B cell (primary cell): ENCODE measurements at regions of chr2 and their contacts with region 1.

Region 1: GRCh38 chr2:224025874-224026273 is 13.2 kb downstream of the SERPINE2 start:
- DNase-seq: peak; percentile 90
- ATAC-seq: peak; percentile 97
- H3K4me3 ChIP-seq: peak overlapping the region in 2 of 5 experiments; percentile 2 to 40
- H3K4me3 Mint-ChIP-seq: peak overlapping the region; percentile 57
- H3K27ac ChIP-seq: peak overlapping the region; percentile 43 to 44
- H3K27ac Mint-ChIP-seq: peak overlapping the region; percentile 74
- H3K4me1 ChIP-seq: peaks cover 36% of the 10 kb centered on the region in 2 donors
- H3K4me1 Mint-ChIP-seq: peaks cover 40% of the 10 kb centered on the region
- H3K27me3 ChIP-seq: no peaks in the 10 kb centered on the region
- H3K27me3 Mint-ChIP-seq: no peaks in the 10 kb centered on the region
- CTCF ChIP-seq: no peak

Region 2: GRCh38 chr2:224009605-224010315 is 16.1 kb before region 1 on chr2:
- CTCF ChIA-PET with region 1: no interaction called
- POLR2A ChIA-PET with region 1: no interaction called
- intact Hi-C with region 1: no loop called
- DNase-seq: no peak
- ATAC-seq: no peak
- H3K4me3 ChIP-seq: no peak overlapping the region
- H3K4me3 Mint-ChIP-seq: no peak overlapping the region
- H3K27ac ChIP-seq: no peak overlapping the region
- H3K27ac Mint-ChIP-seq: no peak overlapping the region
- H3K4me1 ChIP-seq: no peaks in the 10 kb centered on the region
- H3K4me1 Mint-ChIP-seq: no peaks in the 10 kb centered on the region
- H3K27me3 ChIP-seq: no peaks in the 10 kb centered on the region
- H3K27me3 Mint-ChIP-seq: no peaks in the 10 kb centered on the region
- CTCF ChIP-seq: no peak

Region 3: DNA sequence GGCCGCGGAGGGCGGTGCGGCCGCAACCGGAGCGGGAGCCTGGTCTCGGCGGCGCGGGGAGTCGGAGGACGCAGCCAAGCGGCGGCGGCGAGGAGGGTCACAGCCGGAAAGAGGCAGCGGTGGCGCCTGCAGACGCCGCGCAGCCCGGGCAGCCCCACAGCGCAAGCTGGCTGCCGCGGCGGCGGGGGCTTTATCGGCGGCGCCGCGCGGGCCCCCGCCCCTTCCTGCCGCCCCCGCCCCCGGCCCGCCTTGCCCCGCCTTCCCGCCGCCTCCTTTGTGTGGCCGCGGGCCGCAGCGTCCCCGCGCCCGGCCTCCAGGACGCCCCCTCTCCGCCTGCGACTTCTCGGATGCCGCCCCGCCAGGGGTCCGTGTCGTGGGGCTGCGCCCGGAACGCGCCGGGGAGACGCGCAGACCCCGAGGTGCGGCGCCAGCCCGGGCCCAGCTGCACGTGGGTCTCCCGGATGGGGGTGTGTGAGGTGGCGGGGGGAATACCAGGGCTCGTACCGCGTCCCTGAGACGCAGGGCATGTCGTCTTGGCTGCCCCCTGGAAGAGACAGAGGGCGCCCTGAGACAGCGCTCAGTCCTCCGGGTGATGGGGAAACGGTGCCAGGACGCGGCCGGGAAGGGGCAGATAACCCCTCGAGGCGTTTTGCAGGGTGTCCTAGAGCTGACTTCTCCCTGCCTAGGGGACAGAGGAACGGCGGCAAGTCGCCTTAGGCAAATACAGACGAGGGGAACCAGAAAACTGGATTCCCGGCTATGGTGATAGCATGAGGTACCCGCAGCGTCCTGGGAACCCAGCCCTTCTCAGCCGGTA is 13.5 kb after region 1 on chr2 and contains the start of gene SERPINE2:
- CTCF ChIA-PET with region 1: no interaction called
- POLR2A ChIA-PET with region 1: no interaction called
- intact Hi-C with region 1: loop called (anchors 2 kb)
- DNase-seq: peak; percentile 65
- ATAC-seq: peak; percentile 55
- H3K4me3 ChIP-seq: peak within 1 kb of the TSS; percentile 36 to 72 (median 56)
- H3K4me3 Mint-ChIP-seq: peak within 1 kb of the TSS; percentile 94
- H3K27ac ChIP-seq: no peak within 1 kb of the TSS
- H3K27ac Mint-ChIP-seq: no peak within 1 kb of the TSS
- H3K4me1 ChIP-seq: peaks cover 13 to 18% of the 10 kb centered on the region in 2 donors
- H3K4me1 Mint-ChIP-seq: peaks cover 19% of the 10 kb centered on the region
- H3K27me3 ChIP-seq: peaks cover 0 to 55% (median 20%) of the 10 kb centered on the region in 4 experiments
- H3K27me3 Mint-ChIP-seq: peaks cover 64% of the 10 kb centered on the region
- CTCF ChIP-seq: no peak
- total RNA-seq, gene SERPINE2: 1.2 and 1.8 TPM in 2 replicates

Region 4: DNA sequence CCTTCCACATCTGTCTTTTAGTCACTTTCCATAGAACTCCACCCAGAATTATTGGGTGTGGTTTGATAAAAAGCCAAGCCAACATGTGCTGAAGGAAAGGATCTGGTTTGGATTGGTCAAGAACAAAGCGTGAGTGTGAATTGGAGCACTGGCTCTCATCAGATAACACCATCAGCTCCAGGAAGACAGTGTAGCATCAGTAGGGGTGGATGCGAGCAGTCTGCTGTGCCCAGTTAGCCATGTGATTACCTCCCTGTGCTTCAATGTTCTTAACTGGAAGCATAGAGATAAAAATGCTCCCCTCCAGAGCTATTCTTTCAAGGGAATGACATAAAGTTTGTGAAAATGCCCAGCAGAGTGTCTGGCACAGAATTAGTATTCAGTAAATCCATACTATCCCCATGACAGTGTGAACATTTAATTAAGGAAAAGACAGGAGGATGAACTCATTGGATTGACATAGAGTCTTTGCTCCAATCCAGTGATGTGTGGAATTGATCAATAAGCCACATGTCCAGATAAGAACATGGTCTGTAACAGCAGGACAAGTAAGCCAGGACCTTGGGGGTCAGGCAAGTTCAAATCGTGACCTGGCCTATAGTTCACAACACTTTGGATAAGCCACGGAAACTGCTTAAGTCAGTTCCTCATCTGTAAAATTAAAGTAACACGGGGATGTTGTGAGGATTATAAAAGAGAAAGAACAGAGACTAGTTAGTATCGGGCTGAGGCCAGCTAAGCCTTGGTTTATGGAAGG is 308.0 kb after region 1 on chr2:
- CTCF ChIA-PET with region 1: no interaction called
- POLR2A ChIA-PET with region 1: no interaction called
- intact Hi-C with region 1: no loop called
- DNase-seq: no peak
- ATAC-seq: no peak
- H3K4me3 ChIP-seq: no peak overlapping the region
- H3K4me3 Mint-ChIP-seq: no peak overlapping the region
- H3K27ac ChIP-seq: no peak overlapping the region
- H3K27ac Mint-ChIP-seq: no peak overlapping the region
- H3K4me1 ChIP-seq: no peaks in the 10 kb centered on the region
- H3K4me1 Mint-ChIP-seq: no peaks in the 10 kb centered on the region
- H3K27me3 ChIP-seq: peaks cover 0 to 1% (median under 1%) of the 10 kb centered on the region in 4 experiments
- H3K27me3 Mint-ChIP-seq: peaks cover 38% of the 10 kb centered on the region
- CTCF ChIP-seq: no peak

Region 5: DNA sequence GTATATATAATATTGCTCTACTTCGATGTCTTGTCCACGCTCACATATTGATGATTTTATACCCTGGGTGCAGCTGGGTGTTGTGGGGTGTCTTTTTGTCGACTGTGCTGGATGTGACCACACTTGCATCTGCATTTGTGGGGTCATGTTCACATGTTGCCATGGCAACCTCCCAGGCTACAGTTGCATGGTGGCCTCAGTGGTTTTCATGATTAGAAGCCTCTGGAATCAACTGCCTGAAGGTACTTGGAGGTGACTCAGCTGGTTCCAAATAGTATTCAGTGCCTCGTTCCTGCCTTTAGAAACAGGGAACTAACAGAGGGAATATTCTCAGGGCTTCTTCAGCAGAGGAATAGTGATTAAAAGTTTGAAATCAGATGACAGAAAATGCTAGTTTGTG is 1207.4 kb after region 1 on chr2:
- CTCF ChIA-PET with region 1: no interaction called
- POLR2A ChIA-PET with region 1: no interaction called
- intact Hi-C with region 1: no loop called
- DNase-seq: no peak
- ATAC-seq: no peak
- H3K4me3 ChIP-seq: no peak overlapping the region
- H3K4me3 Mint-ChIP-seq: no peak overlapping the region
- H3K27ac ChIP-seq: no peak overlapping the region
- H3K27ac Mint-ChIP-seq: no peak overlapping the region
- H3K4me1 ChIP-seq: no peaks in the 10 kb centered on the region
- H3K4me1 Mint-ChIP-seq: no peaks in the 10 kb centered on the region
- H3K27me3 ChIP-seq: peaks cover 0 to 3% (median 0%) of the 10 kb centered on the region in 4 experiments
- H3K27me3 Mint-ChIP-seq: no peaks in the 10 kb centered on the region
- CTCF ChIP-seq: no peak